Left ventricle myocardium inferior (tissue), 1 donor: ENCODE measurements at regions of chr16 and their contacts with region 1.

Region 1: GRCh38 chr16:77437859-77438258 is 3.0 kb upstream of the ADAMTS18 start:
- DNase-seq: no peak
- H3K4me3 ChIP-seq: no peak overlapping the region
- H3K27ac ChIP-seq: no peak overlapping the region
- H3K4me1 ChIP-seq: peaks cover 6% of the 10 kb centered on the region
- H3K27me3 ChIP-seq: peaks cover 51% of the 10 kb centered on the region
- CTCF ChIP-seq: peak; percentile 31

Region 2: GRCh38 chr16:77359065-77359502 is 78.8 kb before region 1 on chr16:
- intact Hi-C with region 1: no loop called
- DNase-seq: no peak
- H3K4me3 ChIP-seq: no peak overlapping the region
- H3K27ac ChIP-seq: no peak overlapping the region
- H3K4me1 ChIP-seq: no peaks in the 10 kb centered on the region
- H3K27me3 ChIP-seq: peaks cover 3% of the 10 kb centered on the region
- CTCF ChIP-seq: no peak

Region 3: GRCh38 chr16:77480681-77481315 is 42.9 kb after region 1 on chr16:
- intact Hi-C with region 1: loop called (anchors 10 kb)
- DNase-seq: no peak
- H3K4me3 ChIP-seq: no peak overlapping the region
- H3K27ac ChIP-seq: no peak overlapping the region
- H3K4me1 ChIP-seq: no peaks in the 10 kb centered on the region
- H3K27me3 ChIP-seq: no peaks in the 10 kb centered on the region
- CTCF ChIP-seq: no peak

Region 4: DNA sequence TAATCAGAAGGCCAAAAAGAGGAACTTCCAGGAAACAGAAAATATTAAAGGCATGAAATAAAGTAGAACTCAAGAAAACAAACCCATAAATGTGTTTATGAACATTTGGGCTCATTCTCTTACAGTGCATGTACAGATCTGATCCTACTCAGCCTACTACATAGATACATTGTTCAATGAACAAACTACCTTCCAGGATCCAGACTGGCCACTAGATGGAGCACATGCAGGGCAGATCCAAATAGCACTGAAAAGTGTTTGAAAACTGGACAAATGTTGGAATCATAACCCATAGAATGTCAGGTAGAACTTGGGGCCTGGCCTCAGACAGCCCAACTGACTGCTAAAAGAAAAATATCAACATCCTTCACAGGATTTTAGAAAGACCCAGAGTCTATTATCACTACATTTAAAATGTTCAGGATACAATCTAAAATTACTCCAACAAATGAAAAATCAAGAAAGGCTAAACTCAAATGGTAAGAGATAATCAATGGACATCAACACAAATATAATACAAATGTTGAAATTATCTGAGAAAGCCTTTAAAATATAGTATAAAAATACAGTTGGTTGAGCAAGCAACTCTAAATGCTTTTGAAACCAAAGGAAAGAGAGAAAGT is 162.0 kb after region 1 on chr16:
- intact Hi-C with region 1: no loop called
- DNase-seq: no peak
- H3K4me3 ChIP-seq: no peak overlapping the region
- H3K27ac ChIP-seq: no peak overlapping the region
- H3K4me1 ChIP-seq: peaks cover 2% of the 10 kb centered on the region
- H3K27me3 ChIP-seq: no peaks in the 10 kb centered on the region
- CTCF ChIP-seq: peak; percentile 73

Region 5: GRCh38 chr16:77647726-77648125 is 209.9 kb after region 1 on chr16:
- intact Hi-C with region 1: no loop called
- DNase-seq: no peak
- H3K4me3 ChIP-seq: no peak overlapping the region
- H3K27ac ChIP-seq: no peak overlapping the region
- H3K4me1 ChIP-seq: no peaks in the 10 kb centered on the region
- H3K27me3 ChIP-seq: peaks cover 62% of the 10 kb centered on the region
- CTCF ChIP-seq: no peak

Region 6: DNA sequence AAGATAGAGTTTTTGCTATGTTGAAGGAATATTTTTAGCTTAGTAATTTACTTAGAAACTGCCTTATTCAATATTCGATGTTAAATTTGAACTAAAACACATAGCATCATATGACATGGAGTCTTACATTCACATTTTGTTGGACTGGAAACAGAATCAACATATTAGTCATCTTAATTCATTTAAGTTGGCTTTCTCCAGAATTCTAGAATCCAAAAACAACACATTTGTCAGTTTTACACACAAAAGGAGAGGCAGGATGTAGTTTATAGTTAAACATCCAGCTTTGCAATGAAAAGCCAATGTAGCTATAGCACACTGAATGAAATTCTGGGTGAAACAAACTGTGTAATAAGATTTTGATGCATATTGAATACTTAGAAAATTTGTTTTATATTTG is 704.9 kb after region 1 on chr16:
- intact Hi-C with region 1: no loop called
- DNase-seq: no peak
- H3K4me3 ChIP-seq: no peak overlapping the region
- H3K27ac ChIP-seq: no peak overlapping the region
- H3K4me1 ChIP-seq: no peaks in the 10 kb centered on the region
- H3K27me3 ChIP-seq: no peaks in the 10 kb centered on the region
- CTCF ChIP-seq: no peak